GM12878 (cell line): ENCODE measurements at regions of chr5 and their contacts with region 1.

Region 1: DNA sequence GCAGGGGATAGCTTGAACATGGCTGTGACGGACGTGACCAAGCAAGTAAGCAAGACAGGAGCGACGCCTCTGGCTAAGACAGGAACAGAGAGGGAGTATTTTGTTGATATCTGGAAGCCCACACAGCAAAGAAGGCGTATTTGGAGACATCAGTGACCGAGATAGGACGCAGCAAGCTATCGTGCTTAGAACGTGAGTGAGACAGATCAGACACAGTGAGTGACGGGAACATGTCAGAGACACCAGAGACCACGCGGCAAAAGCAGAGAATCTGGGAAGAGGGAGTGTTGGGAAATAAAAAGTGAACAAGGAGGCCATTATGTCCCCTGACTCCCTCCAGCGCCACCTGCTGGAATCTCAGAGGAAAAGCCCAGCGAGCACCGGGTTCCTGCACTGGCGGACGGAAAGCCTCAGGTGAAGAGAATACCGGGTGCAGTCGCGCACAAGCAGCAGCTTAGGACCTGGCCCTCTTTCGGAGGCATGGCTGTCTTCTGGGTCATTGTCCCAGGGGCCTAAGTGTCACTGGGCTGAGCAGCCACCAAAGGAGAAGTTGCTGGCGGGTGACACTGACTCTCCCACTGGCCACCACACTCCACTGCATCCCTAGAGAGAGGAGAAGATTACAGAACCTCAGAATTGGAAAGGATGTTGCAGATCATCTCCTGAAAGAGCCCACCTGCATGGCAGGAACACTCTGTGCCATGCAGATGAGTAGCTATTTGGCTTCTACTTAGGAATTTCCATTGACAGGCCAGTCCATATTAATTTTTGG is 99.1 kb downstream of the FBXO38 start:
- DNase-seq: peak; percentile 1
- ATAC-seq: peak; percentile 98
- H3K4me3 ChIP-seq: no peak overlapping the region
- H3K27ac ChIP-seq: no peak overlapping the region
- H3K4me1 ChIP-seq: no peaks in the 10 kb centered on the region
- H3K27me3 ChIP-seq: no peaks in the 10 kb centered on the region
- CTCF ChIP-seq: peak; percentile 72 to 86 (median 74)
- EP300 ChIP-seq: no peak
- POLR2A ChIP-seq: no peak
- RAD21 ChIP-seq: 0 out of 2 replicates have a peak, but pooled peaks have one; percentile 21

Region 2: DNA sequence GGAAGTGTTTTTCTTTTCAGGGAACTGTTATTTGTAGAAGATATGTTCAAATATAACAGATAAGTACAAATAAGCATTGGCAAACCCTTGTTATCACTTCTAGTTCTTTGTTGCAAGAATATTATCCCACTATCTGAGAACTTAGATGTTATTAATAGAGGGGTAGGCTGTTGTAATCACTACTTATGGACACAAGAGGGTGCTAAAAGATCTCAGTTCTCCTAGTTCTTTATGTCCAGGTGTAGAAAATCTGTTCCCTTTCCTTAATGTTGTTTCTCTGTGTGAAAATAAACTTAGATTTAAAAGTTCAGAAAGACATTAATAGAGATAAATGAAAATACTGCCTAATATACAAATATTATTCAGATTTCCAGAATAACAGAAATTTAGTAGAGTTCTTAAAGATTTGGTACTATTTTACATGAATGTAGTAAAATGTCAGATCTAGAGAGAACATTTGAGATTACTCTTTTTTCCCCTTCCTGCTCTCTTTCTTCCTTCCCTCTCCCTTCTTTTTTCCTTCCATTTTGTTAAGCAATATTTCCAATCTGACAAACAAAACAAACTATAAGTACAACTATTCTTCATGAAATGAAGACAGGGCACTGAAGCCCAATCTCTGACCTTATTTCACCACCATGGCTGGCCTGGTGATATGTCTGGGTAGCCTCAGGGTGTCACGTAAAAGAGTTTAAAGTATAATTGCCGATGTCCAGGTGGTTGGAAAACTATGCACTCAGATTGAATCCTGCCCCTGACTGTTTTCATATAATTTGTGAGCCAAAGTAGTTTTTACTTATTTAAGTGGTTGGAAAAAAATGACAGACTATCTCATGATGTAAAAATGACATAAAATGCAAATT is 532.9 kb before region 1 on chr5:
- CTCF ChIA-PET with region 1: no interaction called
- POLR2A ChIA-PET with region 1: no interaction called
- RAD21 ChIA-PET with region 1: no interaction called
- SMC1A ChIA-PET with region 1: no interaction called
- in situ Hi-C with region 1: no loop called
- intact Hi-C with region 1: loop called (anchors 5 kb)
- DNase-seq: no peak
- ATAC-seq: peak; percentile 77
- H3K4me3 ChIP-seq: no peak overlapping the region
- H3K27ac ChIP-seq: no peak overlapping the region
- H3K4me1 ChIP-seq: no peaks in the 10 kb centered on the region
- H3K27me3 ChIP-seq: no peaks in the 10 kb centered on the region
- CTCF ChIP-seq: peak; percentile 48 to 66 (median 48); a peak in 4 of 6 replicates
- EP300 ChIP-seq: no peak
- POLR2A ChIP-seq: no peak
- RAD21 ChIP-seq: peak; percentile 68

Region 3: DNA sequence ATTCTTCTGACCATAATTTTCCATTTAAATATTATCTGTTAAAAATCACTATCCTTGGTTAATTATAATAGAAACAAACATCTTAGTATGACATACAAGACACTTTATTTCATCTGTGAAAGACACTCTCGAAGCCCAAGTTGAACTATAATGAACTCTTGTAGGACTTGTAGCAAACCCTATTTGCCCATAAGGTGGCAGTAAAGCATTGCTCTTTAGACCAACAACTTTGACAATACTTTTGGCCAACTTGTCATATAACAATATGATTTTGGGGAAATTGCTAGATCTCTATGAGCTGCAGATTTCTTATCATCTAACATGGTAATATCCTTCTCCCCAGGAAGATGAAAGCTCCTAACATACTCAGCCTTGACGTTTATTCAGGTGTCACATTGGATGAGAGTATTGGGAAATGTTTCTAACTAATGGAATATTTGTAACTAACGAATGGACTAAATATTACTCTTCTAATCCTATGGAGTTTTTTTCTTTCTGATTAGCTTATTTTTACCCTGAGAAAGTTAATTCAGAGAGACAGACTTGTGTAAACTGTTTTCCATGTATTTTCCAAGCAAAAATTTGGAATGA is 303.5 kb before region 1 on chr5:
- CTCF ChIA-PET with region 1: interaction called, 7 read pairs
- POLR2A ChIA-PET with region 1: no interaction called
- RAD21 ChIA-PET with region 1: interaction called, 4 read pairs
- SMC1A ChIA-PET with region 1: no interaction called
- in situ Hi-C with region 1: loop called (anchors 25 kb)
- intact Hi-C with region 1: loop called (anchors 2 kb)
- DNase-seq: peak; percentile 4
- ATAC-seq: peak; percentile 77
- H3K4me3 ChIP-seq: no peak overlapping the region
- H3K27ac ChIP-seq: no peak overlapping the region
- H3K4me1 ChIP-seq: no peaks in the 10 kb centered on the region
- H3K27me3 ChIP-seq: no peaks in the 10 kb centered on the region
- CTCF ChIP-seq: peak; percentile 57 to 75 (median 61); a peak in 5 of 6 replicates
- EP300 ChIP-seq: no peak
- POLR2A ChIP-seq: no peak
- RAD21 ChIP-seq: peak; percentile 87

Region 4: GRCh38 chr5:148290271-148291195 is 192.3 kb before region 1 on chr5:
- CTCF ChIA-PET with region 1: no interaction called
- POLR2A ChIA-PET with region 1: no interaction called
- RAD21 ChIA-PET with region 1: no interaction called
- SMC1A ChIA-PET with region 1: no interaction called
- in situ Hi-C with region 1: no loop called
- intact Hi-C with region 1: loop called (anchors 10 kb)
- DNase-seq: no peak
- ATAC-seq: peak; percentile 57; the same call in 2 of the 3 replicates
- H3K4me3 ChIP-seq: no peak overlapping the region
- H3K27ac ChIP-seq: no peak overlapping the region
- H3K4me1 ChIP-seq: no peaks in the 10 kb centered on the region
- H3K27me3 ChIP-seq: no peaks in the 10 kb centered on the region
- CTCF ChIP-seq: peak; percentile 15 to 36 (median 28); a peak in 4 of 6 replicates
- EP300 ChIP-seq: no peak
- POLR2A ChIP-seq: no peak
- RAD21 ChIP-seq: peak; percentile 32; the same call in 1 of the 2 replicates

Region 5: DNA sequence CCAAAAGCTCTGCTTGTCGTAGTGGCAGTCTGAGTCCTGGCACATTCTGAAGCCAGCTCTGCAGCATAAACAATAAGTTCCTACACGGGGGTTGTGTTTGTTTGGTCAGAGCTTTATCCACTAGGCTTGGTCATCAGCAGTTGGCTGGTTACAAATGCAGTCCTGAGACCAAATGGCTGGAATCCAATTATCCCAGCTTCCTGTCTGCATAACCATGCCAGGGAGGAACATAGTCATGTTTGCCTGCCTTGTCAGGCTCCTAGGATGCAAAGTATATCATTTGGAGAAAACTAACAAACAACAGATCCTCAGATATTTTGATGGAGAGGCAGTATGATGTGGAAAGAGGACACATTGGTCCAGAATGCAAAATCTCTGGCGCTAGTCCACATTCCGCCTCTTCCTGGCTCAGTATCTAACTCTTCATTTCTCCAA is 13.4 kb before region 1 on chr5:
- CTCF ChIA-PET with region 1: interaction called, 11 read pairs
- POLR2A ChIA-PET with region 1: no interaction called
- RAD21 ChIA-PET with region 1: no interaction called
- SMC1A ChIA-PET with region 1: no interaction called
- in situ Hi-C with region 1: no loop called
- intact Hi-C with region 1: no loop called
- DNase-seq: no peak
- ATAC-seq: no peak
- H3K4me3 ChIP-seq: no peak overlapping the region
- H3K27ac ChIP-seq: no peak overlapping the region
- H3K4me1 ChIP-seq: no peaks in the 10 kb centered on the region
- H3K27me3 ChIP-seq: no peaks in the 10 kb centered on the region
- CTCF ChIP-seq: no peak
- EP300 ChIP-seq: no peak
- POLR2A ChIP-seq: no peak
- RAD21 ChIP-seq: no peak